Activated naive CD4-positive, alpha-beta T cell treated with anti-CD3 and anti-CD28 coated beads for 36 hours (primary cell): ENCODE measurements at regions of chr6 and their contacts with region 1.

Region 1: GRCh38 chr6:73610444-73611275 is 43.1 kb downstream of the SLC17A5 start:
- DNase-seq: no peak
- H3K4me3 Mint-ChIP-seq: no peak overlapping the region
- H3K27ac Mint-ChIP-seq: peak overlapping the region; percentile 26
- H3K4me1 Mint-ChIP-seq: peaks cover 7% of the 10 kb centered on the region
- H3K27me3 Mint-ChIP-seq: no peaks in the 10 kb centered on the region

Region 2: DNA sequence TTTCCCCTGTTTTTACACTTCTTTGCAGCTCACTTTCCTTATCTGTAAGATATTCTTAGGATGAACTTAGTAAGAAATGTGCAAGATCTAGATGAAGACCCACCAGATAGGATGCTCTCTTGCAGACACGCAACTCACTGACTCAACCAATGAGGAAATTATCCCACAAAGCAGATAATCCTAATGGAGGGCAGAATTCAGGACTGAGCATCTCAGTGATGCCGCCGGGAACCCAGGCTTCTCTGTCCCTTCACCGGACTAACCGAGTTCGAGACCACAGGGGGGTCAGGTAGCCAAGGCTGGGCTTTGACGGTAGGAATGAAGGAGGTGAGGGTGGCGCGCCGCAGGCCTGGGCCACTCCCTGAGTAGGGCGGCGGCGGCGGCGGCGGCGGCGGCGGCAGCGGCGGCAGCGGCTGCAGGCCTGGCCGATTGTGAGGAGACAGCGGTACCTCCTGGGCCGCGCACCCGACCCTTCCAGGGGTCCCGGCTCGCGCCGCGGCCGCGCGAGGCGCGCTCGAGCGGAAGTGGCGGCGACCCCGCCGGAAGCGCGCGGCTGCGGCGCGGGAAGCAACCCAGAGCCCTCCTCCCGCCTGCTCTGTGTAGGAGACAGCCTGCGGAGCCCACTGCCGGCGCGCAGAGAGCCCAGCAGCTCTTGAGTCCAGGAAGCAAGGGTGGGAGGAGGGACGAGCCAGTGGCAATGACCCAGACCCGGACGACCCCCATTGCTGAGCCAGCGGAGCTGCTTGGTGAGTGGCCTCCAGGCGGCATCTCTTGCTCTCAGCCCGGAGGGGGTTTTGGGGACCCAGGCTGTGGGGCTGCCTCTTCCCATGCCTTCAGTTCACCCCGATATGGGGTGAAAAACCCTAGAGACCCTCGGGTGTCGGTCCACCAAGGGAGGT is 347.7 kb before region 1 on chr6 and contains the start of gene KHDC1:
- CTCF ChIA-PET with region 1: interaction called, 5 read pairs
- intact Hi-C with region 1: loop called (anchors 10 kb)
- DNase-seq: peak; percentile 65
- H3K4me3 Mint-ChIP-seq: peak within 1 kb of the TSS; percentile 80
- H3K27ac Mint-ChIP-seq: peak within 1 kb of the TSS; percentile 56
- H3K4me1 Mint-ChIP-seq: peaks cover 30% of the 10 kb centered on the region
- H3K27me3 Mint-ChIP-seq: no peaks in the 10 kb centered on the region
- total RNA-seq, gene KHDC1: 1.1 to 1.6 TPM

Region 3: GRCh38 chr6:73451223-73452107 is 159.2 kb before region 1 on chr6:
- CTCF ChIA-PET with region 1: interaction called, 3 read pairs
- intact Hi-C with region 1: loop called (anchors 5 kb)
- DNase-seq: peak; percentile 60
- H3K4me3 Mint-ChIP-seq: peak overlapping the region; percentile 90
- H3K27ac Mint-ChIP-seq: peak overlapping the region; percentile 86
- H3K4me1 Mint-ChIP-seq: peaks cover 35% of the 10 kb centered on the region
- H3K27me3 Mint-ChIP-seq: no peaks in the 10 kb centered on the region

Region 4: GRCh38 chr6:73580247-73581149 is 30.2 kb before region 1 on chr6:
- CTCF ChIA-PET with region 1: interaction called, 9 read pairs
- intact Hi-C with region 1: loop called (anchors 1 kb)
- DNase-seq: peak; percentile 90
- H3K4me3 Mint-ChIP-seq: peak overlapping the region; percentile 76
- H3K27ac Mint-ChIP-seq: peak overlapping the region; percentile 99
- H3K4me1 Mint-ChIP-seq: peaks cover 28% of the 10 kb centered on the region
- H3K27me3 Mint-ChIP-seq: no peaks in the 10 kb centered on the region

Region 5: DNA sequence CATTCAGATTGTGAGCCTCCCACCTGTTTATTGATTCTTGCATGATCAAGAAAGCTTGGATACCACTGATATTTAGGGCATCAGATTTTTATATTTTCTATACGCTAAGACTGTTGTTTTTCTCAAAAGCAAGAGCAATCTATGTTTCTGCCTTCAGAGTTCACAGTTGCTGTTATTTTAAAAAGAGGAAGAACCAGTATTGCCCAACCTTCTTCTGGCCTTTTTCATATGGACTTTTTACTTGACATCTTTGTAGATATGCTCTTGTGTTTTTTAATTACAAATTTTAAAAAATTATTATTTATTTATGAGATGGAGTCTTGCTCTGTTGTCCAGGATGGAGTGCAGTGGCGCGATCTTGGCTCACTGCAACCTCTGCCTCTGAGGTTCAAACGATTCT is 14.2 kb after region 1 on chr6:
- CTCF ChIA-PET with region 1: interaction called, 12 read pairs
- intact Hi-C with region 1: no loop called
- DNase-seq: no peak
- H3K4me3 Mint-ChIP-seq: no peak overlapping the region
- H3K27ac Mint-ChIP-seq: no peak overlapping the region
- H3K4me1 Mint-ChIP-seq: peaks cover 9% of the 10 kb centered on the region
- H3K27me3 Mint-ChIP-seq: no peaks in the 10 kb centered on the region

Region 6: DNA sequence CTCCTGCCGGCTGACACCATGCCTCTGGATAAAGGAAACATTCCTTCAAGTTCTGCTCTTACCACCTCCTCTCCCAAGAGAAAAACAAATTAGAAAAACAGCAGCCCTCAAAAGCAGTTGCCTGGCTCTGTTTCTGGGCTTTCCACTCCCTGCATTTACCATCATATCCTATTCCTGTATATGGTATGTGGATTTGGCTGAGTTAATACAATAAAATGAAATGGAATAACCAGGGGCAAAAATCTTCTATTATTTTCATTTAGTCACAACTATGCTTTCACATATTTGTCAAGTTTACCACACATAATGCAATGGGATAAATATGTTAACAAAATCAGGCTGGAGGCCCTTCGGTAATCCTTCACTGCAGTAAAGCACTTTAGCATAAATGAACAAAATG is 1560.9 kb after region 1 on chr6:
- CTCF ChIA-PET with region 1: no interaction called
- intact Hi-C with region 1: no loop called
- DNase-seq: no peak
- H3K4me3 Mint-ChIP-seq: no peak overlapping the region
- H3K27ac Mint-ChIP-seq: no peak overlapping the region
- H3K4me1 Mint-ChIP-seq: no peaks in the 10 kb centered on the region
- H3K27me3 Mint-ChIP-seq: peaks cover 10% of the 10 kb centered on the region